Activated CD4-positive, alpha-beta T cell treated with anti-CD3 and anti-CD28 coated beads, Interleukin-2, amount 10 ng/mL, durations not matched to agents 7 days and 5 days (primary cell): ENCODE measurements at regions of chr20 and their contacts with region 1.

Region 1: GRCh38 chr20:53738039-53738944 is 144.7 kb upstream of the ZNF217 start:
- DNase-seq: no peak
- H3K4me3 Mint-ChIP-seq: no peak overlapping the region
- H3K27ac Mint-ChIP-seq: no peak overlapping the region
- H3K4me1 Mint-ChIP-seq: peaks cover 64% of the 10 kb centered on the region
- H3K27me3 Mint-ChIP-seq: no peaks in the 10 kb centered on the region

Region 2: DNA sequence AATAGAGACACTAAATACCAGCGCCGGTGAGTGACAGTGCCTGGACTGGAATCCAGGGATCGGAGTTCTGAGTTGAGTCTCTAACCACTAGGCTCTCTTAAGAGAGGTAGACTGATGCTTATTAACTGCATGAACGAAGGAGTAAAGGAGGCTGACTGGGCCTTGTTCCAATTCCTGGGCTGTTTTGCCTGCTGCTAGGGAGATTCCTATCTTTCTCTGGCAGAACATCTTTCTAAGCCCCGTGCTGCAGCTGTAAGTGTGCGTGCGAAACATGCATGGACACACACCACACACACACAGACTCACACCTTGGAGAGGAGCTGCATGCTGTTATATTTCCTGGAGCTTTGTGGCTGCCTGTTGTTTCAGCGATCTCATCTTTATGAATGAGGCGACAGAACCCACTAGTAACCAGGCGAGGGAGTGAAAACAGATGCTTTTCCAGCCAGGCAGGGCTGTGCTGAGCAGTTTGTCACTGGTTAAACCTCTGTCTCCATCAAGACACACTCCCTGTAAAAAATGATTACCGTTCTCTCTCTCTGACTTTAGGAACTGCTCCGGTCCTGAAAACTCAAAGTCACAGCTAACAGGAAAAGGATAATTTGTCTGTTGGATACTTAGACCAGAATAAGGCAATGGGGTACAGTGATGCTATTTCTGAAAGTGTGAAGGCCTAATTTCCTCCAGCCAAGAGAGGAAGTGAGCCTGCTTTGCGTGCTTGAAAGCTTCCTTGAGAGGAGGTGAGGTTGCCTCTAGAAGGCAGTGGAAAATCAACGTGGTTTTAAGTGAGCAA is 12.7 kb after region 1 on chr20:
- CTCF ChIA-PET with region 1: interaction called, 10 read pairs
- POLR2A ChIA-PET with region 1: interaction called, 7 read pairs
- DNase-seq: peak; percentile 68
- H3K4me3 Mint-ChIP-seq: peak overlapping the region; percentile 45
- H3K27ac Mint-ChIP-seq: peak overlapping the region; percentile 95
- H3K4me1 Mint-ChIP-seq: peaks cover 78% of the 10 kb centered on the region
- H3K27me3 Mint-ChIP-seq: no peaks in the 10 kb centered on the region

Region 3: DNA sequence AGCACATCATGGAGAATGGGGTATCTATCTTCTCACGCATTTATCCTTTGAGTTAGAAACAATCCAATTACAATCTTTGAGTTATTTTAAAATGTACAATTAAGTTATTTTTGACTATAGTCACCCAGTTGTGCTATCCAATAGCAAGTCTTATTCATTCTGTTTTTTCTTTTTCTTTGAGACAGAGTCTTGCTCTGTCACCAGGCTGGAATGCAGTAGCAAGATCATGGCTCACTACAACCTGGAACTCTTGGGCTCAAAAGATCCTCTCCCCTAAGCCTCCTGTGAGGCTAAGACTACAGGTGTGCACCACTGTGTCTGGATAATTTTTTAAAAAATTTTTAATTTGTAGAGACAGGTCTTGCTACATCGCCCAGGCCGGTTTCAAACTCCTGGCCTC is 56.9 kb after region 1 on chr20:
- CTCF ChIA-PET with region 1: no interaction called
- POLR2A ChIA-PET with region 1: no interaction called
- DNase-seq: no peak
- H3K4me3 Mint-ChIP-seq: no peak overlapping the region
- H3K27ac Mint-ChIP-seq: no peak overlapping the region
- H3K4me1 Mint-ChIP-seq: no peaks in the 10 kb centered on the region
- H3K27me3 Mint-ChIP-seq: no peaks in the 10 kb centered on the region

Region 4: GRCh38 chr20:53847129-53847836 is 109.0 kb after region 1 on chr20:
- CTCF ChIA-PET with region 1: no interaction called
- POLR2A ChIA-PET with region 1: no interaction called
- DNase-seq: peak; percentile 30
- H3K4me3 Mint-ChIP-seq: peak overlapping the region; percentile 43
- H3K27ac Mint-ChIP-seq: peak overlapping the region; percentile 84
- H3K4me1 Mint-ChIP-seq: peaks cover 65% of the 10 kb centered on the region
- H3K27me3 Mint-ChIP-seq: no peaks in the 10 kb centered on the region